Sciatic nerve (tissue), 2 donors: ENCODE measurements at regions of chr4 and their contacts with region 1.

Region 1: DNA sequence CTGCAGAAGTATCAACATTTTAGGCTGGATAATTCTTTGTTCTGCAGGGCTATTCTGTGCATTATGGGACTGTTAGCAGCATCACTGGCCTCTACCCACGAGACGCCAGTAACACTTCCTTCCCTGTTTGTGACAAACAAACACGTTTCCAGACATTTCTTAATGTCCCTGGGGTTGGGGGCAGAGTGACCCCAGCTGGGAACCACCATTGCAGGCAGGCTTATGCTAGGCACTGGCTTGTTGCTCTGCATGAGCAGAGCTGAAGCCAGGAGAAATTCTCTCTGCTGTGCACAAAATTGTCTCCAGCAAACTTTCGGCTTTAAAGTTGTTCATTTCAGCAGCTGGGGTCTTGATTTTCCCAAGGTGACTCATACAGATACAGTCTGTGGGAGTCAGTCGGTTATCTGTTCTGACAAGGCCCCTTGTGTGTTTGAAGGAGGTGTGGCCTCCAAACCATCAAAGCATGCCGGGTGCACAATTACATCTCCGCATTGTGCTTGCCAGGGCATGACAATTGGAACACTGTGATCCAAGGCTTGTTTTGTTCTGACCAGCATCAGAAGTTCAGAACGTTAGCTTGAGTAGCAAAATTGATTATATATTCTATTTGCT is 156.4 kb upstream of the BOD1L1 start:
- DNase-seq: no peak
- ATAC-seq: no peak

Region 2: DNA sequence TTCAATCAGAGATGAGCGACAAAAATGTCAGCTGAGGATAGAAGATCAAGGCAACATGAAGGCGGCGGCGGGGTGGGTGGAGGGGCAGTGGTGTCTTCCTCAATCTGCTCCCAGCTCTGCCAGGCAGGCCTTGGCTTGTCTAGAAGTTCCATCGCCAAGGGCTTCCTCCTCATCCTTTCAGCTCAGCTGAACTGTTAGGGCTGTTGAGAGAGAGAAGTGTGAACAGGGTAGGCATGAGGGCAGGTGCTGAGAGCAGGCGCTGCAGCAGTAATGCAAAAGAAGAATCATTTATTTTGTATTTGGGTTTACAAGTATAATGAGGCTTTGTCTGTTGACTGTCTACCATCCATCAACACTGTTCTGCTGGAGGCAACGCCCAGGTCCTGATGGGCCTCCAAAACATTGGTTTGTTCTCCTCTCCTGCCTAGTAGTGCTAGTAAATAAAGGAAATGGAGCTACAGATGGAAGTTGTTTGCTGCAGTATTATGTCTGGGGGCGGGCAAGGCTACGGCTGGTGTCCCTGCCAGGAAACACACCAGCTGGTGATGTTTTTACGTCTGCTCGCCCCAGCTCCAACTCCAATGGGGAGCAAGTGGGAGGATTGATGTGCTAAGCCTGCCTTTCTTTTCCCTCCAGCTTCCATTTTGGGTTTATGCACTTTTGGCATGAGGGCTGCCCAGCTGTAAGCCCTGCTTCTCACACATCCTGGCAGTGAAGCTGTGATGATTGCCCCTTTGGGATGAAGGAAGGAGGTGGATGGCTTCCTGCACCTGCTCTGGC is 17.0 kb before region 1 on chr4:
- intact Hi-C with region 1: loop called (anchors 1 kb)
- DNase-seq: no peak
- ATAC-seq: peak; percentile 26